ENCODE measurements at regions of chr11 and their contacts with region 1.

Region 1: GRCh38 chr11:79860329-79860728 is 419.5 kb upstream of the TENM4 start:
- DNase-seq: no peak
- ATAC-seq: no peak
- H3K4me3 ChIP-seq: no peak overlapping the region
- H3K27ac ChIP-seq: no peak overlapping the region
- H3K4me1 ChIP-seq: no peaks in the 10 kb centered on the region
- H3K27me3 ChIP-seq: no peaks in the 10 kb centered on the region
- CTCF ChIP-seq: no peak

Region 2: DNA sequence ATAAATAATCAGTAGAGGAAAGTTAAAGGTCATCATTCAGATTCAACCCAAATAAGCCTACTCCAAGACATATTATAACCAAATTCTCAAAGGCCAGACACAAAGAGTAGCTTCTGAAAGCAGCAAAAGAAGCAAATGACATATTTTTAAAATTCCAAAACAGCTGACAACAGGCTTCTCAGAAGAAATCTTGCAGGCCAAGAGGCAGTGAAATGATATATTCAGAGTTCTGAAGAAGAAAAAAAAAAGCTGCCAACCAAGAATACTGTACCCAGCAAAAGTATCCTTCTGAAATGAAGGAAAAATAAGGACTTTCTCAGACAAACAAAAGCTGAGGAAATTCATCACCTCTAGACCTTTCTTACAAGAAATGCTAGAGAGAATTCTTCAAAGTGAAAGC is 367.6 kb after region 1 on chr11:
- CTCF ChIA-PET with region 1: no interaction called
- POLR2A ChIA-PET with region 1: no interaction called
- in situ Hi-C with region 1: no loop called
- intact Hi-C with region 1: no loop called
- DNase-seq: no peak
- ATAC-seq: no peak
- H3K4me3 ChIP-seq: no peak overlapping the region
- H3K27ac ChIP-seq: no peak overlapping the region
- H3K4me1 ChIP-seq: no peaks in the 10 kb centered on the region
- H3K27me3 ChIP-seq: no peaks in the 10 kb centered on the region
- CTCF ChIP-seq: no peak

Region 3: GRCh38 chr11:80261776-80262175 is 401.4 kb after region 1 on chr11:
- CTCF ChIA-PET with region 1: no interaction called
- POLR2A ChIA-PET with region 1: no interaction called
- in situ Hi-C with region 1: no loop called
- intact Hi-C with region 1: no loop called
- DNase-seq: no peak
- ATAC-seq: no peak
- H3K4me3 ChIP-seq: no peak overlapping the region
- H3K27ac ChIP-seq: no peak overlapping the region
- H3K4me1 ChIP-seq: no peaks in the 10 kb centered on the region
- H3K27me3 ChIP-seq: no peaks in the 10 kb centered on the region
- CTCF ChIP-seq: no peak

Region 4: GRCh38 chr11:81052344-81053158 is 1192.2 kb after region 1 on chr11:
- CTCF ChIA-PET with region 1: interaction called, 10 read pairs
- POLR2A ChIA-PET with region 1: no interaction called
- in situ Hi-C with region 1: no loop called
- intact Hi-C with region 1: no loop called
- DNase-seq: no peak
- ATAC-seq: no peak
- H3K4me3 ChIP-seq: no peak overlapping the region
- H3K27ac ChIP-seq: no peak overlapping the region
- H3K4me1 ChIP-seq: no peaks in the 10 kb centered on the region
- H3K27me3 ChIP-seq: no peaks in the 10 kb centered on the region; the same call in 1 of the 2 replicates
- CTCF ChIP-seq: no peak